Heart left ventricle (tissue), 16 donors: ENCODE measurements at regions of chr2 and their contacts with region 1.

Region 1: DNA sequence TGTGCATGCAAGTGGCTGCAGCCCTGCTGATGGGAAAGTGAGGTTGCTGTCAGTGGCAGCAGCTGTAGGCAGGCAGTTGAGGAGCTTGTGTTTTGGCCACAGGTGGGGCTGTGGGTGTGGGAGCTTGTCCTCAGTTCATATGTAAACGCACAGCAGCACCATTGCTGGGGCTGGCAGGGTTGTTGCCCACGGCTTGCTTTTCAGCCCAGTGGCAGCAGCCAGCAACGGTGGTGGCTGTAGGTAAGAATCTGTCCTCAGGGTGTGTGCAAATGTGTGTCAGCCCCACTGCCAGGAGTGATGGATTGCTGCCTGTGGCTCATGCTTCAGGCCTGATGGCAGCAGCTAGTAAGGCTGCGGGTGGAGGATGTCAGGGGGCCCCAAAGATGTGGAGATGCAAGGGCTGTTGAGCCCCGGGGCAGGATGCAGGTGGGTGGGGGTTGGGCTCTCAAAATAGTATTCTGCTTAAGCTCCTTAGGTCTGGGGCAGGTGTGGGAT is 141.3 kb upstream of the THUMPD2 start:
- DNase-seq: no peak
- ATAC-seq: no peak
- H3K4me3 ChIP-seq: no peak overlapping the region
- H3K27ac ChIP-seq: no peak overlapping the region
- H3K4me1 ChIP-seq: peaks cover 0 to 3% (median 0%) of the 10 kb centered on the region in 12 donors
- H3K27me3 ChIP-seq: no peaks in the 10 kb centered on the region
- CTCF ChIP-seq: no peak
- POLR2A ChIP-seq: no peak

Region 2: DNA sequence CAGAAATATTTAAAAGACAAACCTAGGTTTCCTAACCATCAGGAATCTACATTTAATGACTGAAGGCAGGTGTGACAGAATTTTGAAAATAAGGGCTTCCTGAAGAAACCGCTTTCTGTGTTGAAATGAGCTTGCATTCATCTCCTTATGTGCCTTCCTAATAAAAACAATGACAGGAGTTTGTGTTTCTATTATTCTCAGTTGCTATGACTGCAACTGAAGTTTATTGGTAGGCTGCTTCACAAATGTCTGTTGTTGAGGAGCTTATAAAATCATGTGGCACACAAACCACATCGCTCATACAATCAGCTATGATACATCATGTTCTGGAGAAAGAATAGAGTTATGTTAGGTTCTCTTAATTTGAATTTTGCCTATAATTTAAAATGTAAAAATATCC is 894.3 kb after region 1 on chr2:
- intact Hi-C with region 1: no loop called
- DNase-seq: no peak
- ATAC-seq: no peak
- H3K4me3 ChIP-seq: no peak overlapping the region
- H3K27ac ChIP-seq: no peak overlapping the region
- H3K4me1 ChIP-seq: no peaks in the 10 kb centered on the region
- H3K27me3 ChIP-seq: no peaks in the 10 kb centered on the region
- CTCF ChIP-seq: no peak
- POLR2A ChIP-seq: no peak

Region 3: DNA sequence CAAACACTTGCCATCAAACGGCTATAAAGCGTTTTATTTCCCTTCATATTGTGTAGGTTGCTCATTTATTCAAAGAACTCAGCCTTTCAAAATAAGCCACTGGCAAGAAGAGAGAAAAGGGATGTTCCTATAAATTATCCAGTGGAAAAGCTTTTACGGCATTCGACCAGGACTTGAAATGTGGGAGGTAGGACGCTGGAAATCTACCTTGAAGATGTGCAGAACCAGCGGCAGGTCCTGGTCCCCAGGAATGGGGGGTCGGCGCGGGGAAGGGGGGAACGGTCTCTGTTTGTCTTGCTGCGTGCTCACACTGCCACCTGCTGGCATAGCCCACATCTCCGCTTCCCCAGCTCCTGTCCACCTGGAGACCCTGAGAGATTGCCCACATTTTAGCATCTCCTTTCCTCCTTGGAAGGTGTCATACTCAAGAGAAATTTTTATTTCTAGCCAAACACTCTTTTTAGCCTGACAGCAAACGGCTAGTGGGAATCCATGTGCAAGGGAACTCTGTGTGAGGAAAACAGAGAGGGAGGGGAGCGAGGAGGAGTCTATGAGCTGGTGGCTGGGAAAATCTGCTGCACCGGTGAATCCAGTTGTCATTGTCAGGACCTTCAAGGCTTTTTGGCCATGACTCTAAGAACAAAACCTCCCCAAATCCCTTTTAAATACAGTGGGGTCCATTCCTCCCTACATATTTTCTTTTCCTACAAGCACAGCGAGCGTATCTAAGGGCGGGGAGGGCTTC is 1778.5 kb after region 1 on chr2:
- intact Hi-C with region 1: loop called in 4 of 10 experiments (anchors 5 to 10 kb)
- DNase-seq: peak; percentile 44 to 66 (median 48)
- ATAC-seq: peak; percentile 59 to 71 (median 68)
- H3K4me3 ChIP-seq: peak overlapping the region in 8 of 12 donors; percentile 18 to 42 (median 27)
- H3K27ac ChIP-seq: no peak overlapping the region
- H3K4me1 ChIP-seq: peaks cover 0 to 10% (median 0%) of the 10 kb centered on the region in 12 donors
- H3K27me3 ChIP-seq: no peaks in the 10 kb centered on the region
- CTCF ChIP-seq: peak; percentile 71 to 95 (median 88)
- POLR2A ChIP-seq: no peak